Ascending aorta (tissue), 2 donors: ENCODE measurements at regions of chr6 and their contacts with region 1.

Region 1: DNA sequence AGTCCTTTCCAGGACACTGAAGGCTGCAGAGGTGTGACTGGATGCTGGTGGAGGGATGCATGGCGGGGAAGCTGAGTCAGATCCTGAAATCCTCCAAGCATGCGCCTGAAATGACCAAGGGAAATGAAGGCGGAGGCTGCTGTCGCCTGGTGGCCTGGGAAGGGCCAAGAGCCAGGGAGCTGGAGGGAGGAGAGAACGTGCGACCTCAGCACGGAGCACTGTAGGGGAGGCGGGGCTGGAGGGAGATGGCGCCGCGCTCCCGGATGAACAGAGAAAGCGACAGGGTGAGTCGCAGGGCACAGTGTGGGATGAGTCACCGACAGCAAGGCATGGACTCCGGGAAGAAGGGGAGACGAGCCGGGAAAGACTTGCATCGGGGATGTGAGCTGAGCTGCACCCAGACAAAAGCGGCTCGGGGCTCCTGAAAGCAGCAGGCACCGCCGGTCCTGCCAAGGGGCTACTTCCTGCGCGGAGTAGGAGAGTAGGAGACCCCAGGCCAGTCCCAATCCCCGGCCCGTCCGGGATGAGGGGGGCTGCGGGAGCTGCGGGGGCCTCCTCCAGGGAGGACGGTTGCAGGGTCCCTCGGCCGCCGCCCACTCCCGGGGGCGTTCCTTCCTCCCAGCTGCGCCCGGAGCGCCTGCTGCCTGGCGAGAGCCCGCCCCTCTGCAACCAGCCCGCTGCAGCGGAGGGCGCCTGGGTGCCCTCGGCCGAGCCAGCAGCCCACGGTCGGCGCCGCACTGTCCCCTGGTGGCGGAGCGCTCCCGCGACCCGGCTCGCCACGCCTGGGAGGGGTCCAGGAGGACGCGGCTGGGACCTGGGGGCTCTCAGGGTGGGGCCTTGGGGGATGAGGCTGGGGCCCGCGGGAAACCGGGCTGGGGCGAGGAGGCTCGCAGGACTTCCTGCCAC is 11.0 kb upstream of the NQO2 start:
- DNase-seq: peak; percentile 84 to 97
- H3K4me3 ChIP-seq: peak overlapping the region; percentile 78 to 86
- H3K27ac ChIP-seq: peak overlapping the region; percentile 95 to 98
- H3K4me1 ChIP-seq: peaks cover 6 to 8% of the 10 kb centered on the region in 2 donors
- H3K27me3 ChIP-seq: no peaks in the 10 kb centered on the region
- CTCF ChIP-seq: peak; percentile 87 to 98 (median 97)

Region 2: DNA sequence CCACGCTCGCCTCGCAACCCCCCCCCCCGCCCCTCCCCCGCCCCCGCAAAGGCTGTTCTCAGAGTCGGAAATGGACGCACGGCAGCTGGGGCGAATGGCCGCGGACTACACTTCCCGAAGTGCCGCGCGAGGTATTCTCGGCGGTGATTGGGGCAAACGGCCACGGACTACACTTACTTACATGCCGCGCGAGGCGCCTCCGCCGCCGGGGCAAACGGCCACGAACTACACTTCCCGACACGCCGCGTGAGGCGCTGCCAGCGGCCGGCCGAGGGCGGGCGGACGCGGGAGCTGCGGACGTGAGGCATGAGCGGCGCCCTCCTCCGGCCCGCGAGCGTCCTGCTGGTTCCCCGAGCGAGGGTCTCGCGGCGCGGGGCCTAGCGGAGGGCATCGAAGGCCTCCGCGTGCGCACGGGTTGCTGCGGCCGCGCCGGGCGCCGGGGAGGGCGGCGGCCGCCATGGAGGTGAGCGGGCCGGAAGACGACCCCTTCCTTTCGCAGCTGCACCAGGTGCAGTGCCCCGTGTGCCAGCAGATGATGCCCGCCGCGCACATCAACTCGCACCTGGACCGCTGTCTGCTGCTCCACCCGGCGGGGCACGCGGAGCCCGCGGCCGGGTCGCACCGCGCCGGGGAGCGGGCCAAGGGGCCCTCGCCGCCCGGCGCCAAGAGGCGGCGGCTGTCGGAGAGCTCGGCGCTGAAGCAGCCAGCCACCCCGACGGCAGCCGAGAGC is 223.3 kb before region 1 on chr6 and contains the start of gene WRNIP1:
- intact Hi-C with region 1: loop called (anchors 2 kb)
- DNase-seq: peak; percentile 98 to 100
- H3K4me3 ChIP-seq: peak within 1 kb of the TSS; percentile 93
- H3K27ac ChIP-seq: peak within 1 kb of the TSS; percentile 92 to 99
- H3K4me1 ChIP-seq: peaks cover 6 to 17% of the 10 kb centered on the region in 2 donors
- H3K27me3 ChIP-seq: no peaks in the 10 kb centered on the region
- CTCF ChIP-seq: peak; percentile 47 to 93 (median 58)
- total RNA-seq, gene WRNIP1: 100 TPM

Region 3: DNA sequence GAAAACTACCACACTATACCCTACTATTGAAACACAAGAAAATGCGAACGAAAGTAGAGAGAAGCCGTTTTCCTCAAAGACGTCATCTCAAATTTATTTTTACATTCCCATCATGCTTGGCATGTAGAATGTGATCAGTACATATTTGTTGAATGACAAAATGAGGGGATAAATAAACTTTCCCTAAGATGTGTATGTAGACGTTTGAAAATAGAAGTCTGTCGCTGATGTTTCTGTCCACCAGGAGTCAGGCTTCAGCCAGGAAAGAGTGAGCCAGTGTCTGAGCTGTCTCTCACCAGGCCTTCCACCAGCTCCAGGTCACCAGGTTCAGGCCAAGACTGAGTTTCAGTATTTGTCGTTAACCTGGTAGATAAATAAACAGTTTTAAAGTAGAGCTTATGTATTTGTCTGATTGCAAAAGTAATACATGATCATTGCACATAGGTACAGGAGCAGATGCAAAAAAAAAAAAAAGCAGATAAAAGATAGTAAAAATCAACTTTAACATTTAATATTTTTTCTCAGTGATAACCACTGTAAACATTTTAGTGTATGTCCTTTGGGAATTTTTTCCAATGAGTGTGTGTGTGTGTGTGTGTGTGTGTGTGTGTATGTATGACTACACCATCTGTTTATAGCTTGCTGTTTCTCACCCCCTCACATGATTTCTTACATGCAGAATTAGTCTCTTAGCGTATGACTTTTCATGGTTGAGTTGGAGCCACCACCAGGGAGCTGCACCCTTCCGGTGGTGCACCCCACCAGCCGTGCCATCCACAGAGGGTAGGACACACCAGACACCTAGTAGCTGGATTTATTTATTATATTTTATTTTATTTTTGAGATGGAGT is 197.3 kb before region 1 on chr6:
- intact Hi-C with region 1: loop called (anchors 2 kb)
- DNase-seq: peak; percentile 36 to 92
- H3K4me3 ChIP-seq: peak overlapping the region in 1 of 2 donors; percentile 49
- H3K27ac ChIP-seq: peak overlapping the region; percentile 89 to 95
- H3K4me1 ChIP-seq: peaks cover 9 to 34% of the 10 kb centered on the region in 2 donors
- H3K27me3 ChIP-seq: no peaks in the 10 kb centered on the region
- CTCF ChIP-seq: peak; percentile 74 to 90 (median 77)

Region 4: GRCh38 chr6:2841264-2842138 is 147.2 kb before region 1 on chr6 and contains the start of gene SERPINB1:
- intact Hi-C with region 1: loop called (anchors 1 kb)
- DNase-seq: peak; percentile 75 to 97
- H3K4me3 ChIP-seq: peak within 1 kb of the TSS; percentile 74 to 87
- H3K27ac ChIP-seq: peak within 1 kb of the TSS; percentile 97 to 99
- H3K4me1 ChIP-seq: peaks cover 10 to 16% of the 10 kb centered on the region in 2 donors
- H3K27me3 ChIP-seq: no peaks in the 10 kb centered on the region
- CTCF ChIP-seq: peak in 1 of 3 experiments; percentile 20
- total RNA-seq, gene SERPINB1: 14.0 TPM

Region 5: DNA sequence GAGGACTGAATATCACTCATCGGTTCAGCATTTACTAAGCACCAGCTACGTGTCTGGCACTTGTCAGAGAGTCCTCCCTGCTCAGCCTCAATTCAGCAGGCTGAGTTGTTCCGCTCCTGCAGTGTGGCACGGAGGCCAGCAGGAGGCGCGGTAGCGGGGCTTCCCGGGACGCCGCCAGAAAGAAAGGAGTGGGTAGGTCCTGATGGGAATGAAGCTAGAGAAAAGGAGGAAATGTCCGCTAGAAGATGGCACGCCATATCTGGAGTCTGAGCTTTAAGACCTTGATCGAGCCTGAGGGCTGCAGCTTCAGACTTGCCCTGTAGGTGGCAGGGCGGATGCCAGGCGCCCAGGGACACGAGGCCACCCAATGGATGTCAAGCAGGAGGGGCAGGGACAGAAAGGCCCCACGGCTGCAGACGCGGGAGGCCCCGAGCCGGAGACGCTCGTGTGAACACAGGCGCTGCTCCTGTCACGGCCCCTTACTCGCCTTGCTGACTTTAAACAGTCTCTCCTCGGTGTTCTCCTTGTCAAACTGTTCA is 36.1 kb before region 1 on chr6:
- intact Hi-C with region 1: loop called (anchors 1 kb)
- DNase-seq: peak; percentile 37 to 89
- H3K4me3 ChIP-seq: peak overlapping the region in 1 of 2 donors; percentile 48
- H3K27ac ChIP-seq: peak overlapping the region; percentile 65 to 77
- H3K4me1 ChIP-seq: no peaks in the 10 kb centered on the region
- H3K27me3 ChIP-seq: no peaks in the 10 kb centered on the region
- CTCF ChIP-seq: peak; percentile 97 to 99 (median 98)

Region 6: DNA sequence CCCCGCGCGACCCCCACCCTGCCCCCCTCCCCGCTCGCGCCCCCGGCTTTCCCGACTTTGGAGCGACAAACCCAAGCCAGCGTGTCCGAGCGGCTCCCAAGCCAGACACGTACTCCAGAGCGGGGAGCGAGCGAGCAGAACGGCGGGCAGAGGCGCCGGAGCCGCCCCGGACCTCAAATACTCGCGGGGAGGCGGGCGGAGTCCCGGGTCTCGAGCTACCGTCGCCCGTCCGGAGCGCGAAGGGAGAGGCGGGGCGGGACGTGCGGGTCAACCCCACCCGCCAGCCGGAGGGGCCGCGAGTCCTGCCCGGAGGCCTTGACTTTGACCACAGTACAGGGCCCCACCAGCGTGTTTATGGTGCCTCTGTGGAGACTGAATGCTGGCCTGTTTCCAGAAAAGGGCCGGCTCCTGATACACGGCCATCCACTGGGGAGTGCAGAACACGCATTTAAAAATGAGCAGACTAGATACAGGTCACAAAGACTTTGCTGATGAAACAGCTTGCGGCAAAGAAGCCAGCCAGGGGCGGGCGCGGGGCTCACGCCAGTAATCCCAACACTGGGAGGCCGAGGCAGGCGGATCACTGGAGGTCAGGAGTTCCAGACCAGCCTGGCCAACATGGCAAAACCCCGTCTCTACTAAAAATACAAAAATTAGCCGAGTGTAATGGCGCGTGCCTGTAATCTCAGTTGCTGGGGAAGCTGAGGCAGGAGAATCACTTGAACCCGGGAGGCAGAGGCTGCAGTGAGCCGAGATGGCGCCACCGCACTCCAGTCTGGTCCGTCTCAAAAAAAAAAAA is 17.1 kb before region 1 on chr6 and contains the start of gene SERPINB6:
- intact Hi-C with region 1: loop called (anchors 1 kb)
- DNase-seq: peak in 1 of 2 donors; percentile 90
- H3K4me3 ChIP-seq: peak within 1 kb of the TSS; percentile 84 to 86
- H3K27ac ChIP-seq: peak within 1 kb of the TSS; percentile 99
- H3K4me1 ChIP-seq: peaks cover 0 to 11% of the 10 kb centered on the region in 2 donors
- H3K27me3 ChIP-seq: no peaks in the 10 kb centered on the region
- CTCF ChIP-seq: no peak
- total RNA-seq, gene SERPINB6: 222 TPM

Region 7: GRCh38 chr6:3258720-3259490 is 270.2 kb after region 1 on chr6 and contains the start of gene PSMG4:
- intact Hi-C with region 1: loop called (anchors 10 kb)
- DNase-seq: peak; percentile 65 to 96
- H3K4me3 ChIP-seq: peak within 1 kb of the TSS; percentile 69 to 83
- H3K27ac ChIP-seq: peak within 1 kb of the TSS; percentile 44 to 60
- H3K4me1 ChIP-seq: peaks cover 3 to 15% of the 10 kb centered on the region in 2 donors
- H3K27me3 ChIP-seq: no peaks in the 10 kb centered on the region
- CTCF ChIP-seq: no peak
- total RNA-seq, gene PSMG4: 23.9 TPM